Ascending aorta (tissue), 2 donors: ENCODE measurements at regions of chr3 and their contacts with region 1.

Region 1: DNA sequence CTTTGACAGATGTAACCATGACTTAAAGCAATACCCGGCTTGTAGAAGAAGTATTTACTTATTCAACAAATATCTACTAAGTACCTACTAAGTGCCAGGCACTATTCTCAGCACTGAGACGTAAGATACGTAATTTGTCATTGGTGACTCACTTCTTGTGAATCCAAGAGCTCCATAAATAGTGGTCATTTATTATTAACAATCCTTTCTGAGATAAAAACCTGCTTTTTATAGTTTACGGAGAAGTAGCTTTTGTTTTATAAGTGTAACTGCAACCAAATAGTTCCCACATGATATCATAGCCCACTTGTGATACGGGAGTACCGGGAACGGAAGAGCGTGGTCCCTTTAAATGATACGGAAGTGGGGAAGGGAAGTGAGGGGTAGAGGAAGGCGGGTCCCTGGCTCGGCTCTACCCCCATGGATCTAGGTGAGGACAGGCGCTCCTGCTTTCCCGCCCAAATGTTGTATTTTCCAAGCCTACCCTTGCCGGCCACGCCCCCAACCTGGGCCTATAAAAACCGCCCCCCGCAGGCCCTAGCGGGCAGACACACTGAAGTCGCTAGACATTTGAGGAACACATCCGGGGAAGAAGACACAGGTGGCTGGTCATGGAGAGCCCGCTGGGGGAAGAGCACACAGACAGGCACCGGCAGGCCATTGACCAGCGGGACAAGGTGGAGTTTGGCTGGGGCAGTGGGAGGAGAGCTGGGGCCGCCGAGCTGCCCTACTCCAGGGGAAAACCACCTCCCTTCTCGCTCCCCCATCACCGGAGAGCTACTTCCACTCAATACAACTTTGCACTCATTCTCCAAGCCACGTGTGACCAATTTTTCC is at the start of gene SAMMSON:
- DNase-seq: peak in 1 of 2 donors; percentile 74
- H3K4me3 ChIP-seq: peak within 1 kb of the TSS in 1 of 2 donors; percentile 37
- H3K27ac ChIP-seq: peak within 1 kb of the TSS; percentile 93
- H3K4me1 ChIP-seq: peaks cover 3 to 19% of the 10 kb centered on the region in 2 donors
- H3K27me3 ChIP-seq: no peaks in the 10 kb centered on the region
- CTCF ChIP-seq: no peak
- total RNA-seq, gene SAMMSON: 2.2 TPM

Region 2: GRCh38 chr3:70064194-70064779 is 64.9 kb after region 1 on chr3:
- intact Hi-C with region 1: loop called (anchors 5 kb)
- DNase-seq: no peak
- H3K4me3 ChIP-seq: no peak overlapping the region
- H3K27ac ChIP-seq: peak overlapping the region; percentile 66 to 90
- H3K4me1 ChIP-seq: peaks cover 0 to 30% of the 10 kb centered on the region in 2 donors
- H3K27me3 ChIP-seq: no peaks in the 10 kb centered on the region
- CTCF ChIP-seq: peak; percentile 63 to 78 (median 74)